ENCODE measurements at regions of chr18 and their contacts with region 1.

Region 1: GRCh38 chr18:32974421-32975162 is 201.8 kb upstream of the KLHL14 start:
- DNase-seq: no peak
- ATAC-seq: no peak
- H3K4me3 ChIP-seq: no peak overlapping the region
- H3K4me3 Mint-ChIP-seq: no peak overlapping the region
- H3K27ac ChIP-seq: no peak overlapping the region
- H3K27ac Mint-ChIP-seq: no peak overlapping the region
- H3K4me1 ChIP-seq: no peaks in the 10 kb centered on the region
- H3K4me1 Mint-ChIP-seq: no peaks in the 10 kb centered on the region
- H3K27me3 ChIP-seq: no peaks in the 10 kb centered on the region
- H3K27me3 Mint-ChIP-seq: no peaks in the 10 kb centered on the region

Region 2: DNA sequence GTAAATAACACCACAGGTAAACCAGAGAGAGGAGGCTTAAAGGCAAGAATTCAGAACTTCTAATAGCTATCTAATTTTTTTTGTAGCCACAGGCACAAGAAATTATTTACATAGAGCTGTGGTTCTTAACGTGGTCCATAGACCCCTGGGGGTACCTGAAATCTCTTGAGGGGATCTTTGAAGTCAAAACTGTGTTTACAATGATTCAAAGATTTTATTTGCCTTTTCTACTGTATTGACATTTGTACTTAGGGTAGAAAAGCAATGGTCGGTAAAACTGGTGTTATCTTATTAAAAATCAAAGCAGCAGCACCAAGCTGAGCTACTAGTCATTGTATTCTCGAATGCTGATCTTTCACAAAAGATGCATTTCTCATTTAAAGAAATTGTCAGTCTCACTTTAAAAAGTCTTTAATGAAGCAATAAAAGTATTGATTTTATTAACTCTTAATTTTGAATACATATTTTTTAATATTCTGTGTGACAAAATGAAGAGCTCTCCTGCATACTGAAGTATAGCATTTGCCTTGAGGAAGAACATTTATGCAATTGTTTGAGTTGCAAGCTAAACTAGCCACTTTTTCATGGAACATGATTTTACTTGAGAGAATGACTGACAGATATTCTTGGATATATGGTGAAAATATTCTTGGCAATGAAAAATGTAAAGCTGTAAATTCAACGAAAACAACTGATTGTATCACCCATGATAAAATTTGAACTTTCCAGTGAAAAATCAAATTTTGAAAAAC is 176.2 kb before region 1 on chr18:
- CTCF ChIA-PET with region 1: no interaction called
- POLR2A ChIA-PET with region 1: no interaction called
- intact Hi-C with region 1: no loop called
- DNase-seq: no peak
- ATAC-seq: no peak
- H3K4me3 ChIP-seq: no peak overlapping the region
- H3K4me3 Mint-ChIP-seq: no peak overlapping the region
- H3K27ac ChIP-seq: no peak overlapping the region
- H3K27ac Mint-ChIP-seq: no peak overlapping the region
- H3K4me1 ChIP-seq: no peaks in the 10 kb centered on the region
- H3K4me1 Mint-ChIP-seq: no peaks in the 10 kb centered on the region
- H3K27me3 ChIP-seq: no peaks in the 10 kb centered on the region
- H3K27me3 Mint-ChIP-seq: peaks cover 0 to 5% (median 0%) of the 10 kb centered on the region in 5 donors

Region 3: DNA sequence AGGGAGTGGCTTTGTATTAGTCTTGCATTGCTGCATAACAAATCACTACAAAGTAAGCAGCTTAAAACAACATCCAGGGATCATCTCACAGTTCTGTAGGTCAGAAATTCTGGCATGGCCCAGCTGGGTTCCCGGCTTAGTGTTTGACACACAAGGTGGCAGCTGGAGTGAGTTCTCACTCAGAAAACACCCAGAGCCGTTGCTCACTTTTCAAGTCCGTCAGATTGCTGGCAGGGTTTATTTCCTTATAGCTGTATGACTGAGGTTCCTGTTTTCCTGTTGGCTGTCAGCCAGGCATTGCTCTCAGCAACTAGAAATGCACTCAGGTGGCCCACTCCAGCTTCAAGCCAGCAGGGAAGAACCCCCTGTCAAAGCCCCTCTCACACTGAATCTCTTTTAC is 141.8 kb after region 1 on chr18:
- CTCF ChIA-PET with region 1: no interaction called
- POLR2A ChIA-PET with region 1: no interaction called
- intact Hi-C with region 1: no loop called
- DNase-seq: no peak
- ATAC-seq: no peak
- H3K4me3 ChIP-seq: no peak overlapping the region
- H3K4me3 Mint-ChIP-seq: no peak overlapping the region
- H3K27ac ChIP-seq: no peak overlapping the region
- H3K27ac Mint-ChIP-seq: no peak overlapping the region
- H3K4me1 ChIP-seq: no peaks in the 10 kb centered on the region
- H3K4me1 Mint-ChIP-seq: no peaks in the 10 kb centered on the region
- H3K27me3 ChIP-seq: no peaks in the 10 kb centered on the region
- H3K27me3 Mint-ChIP-seq: no peaks in the 10 kb centered on the region

Region 4: DNA sequence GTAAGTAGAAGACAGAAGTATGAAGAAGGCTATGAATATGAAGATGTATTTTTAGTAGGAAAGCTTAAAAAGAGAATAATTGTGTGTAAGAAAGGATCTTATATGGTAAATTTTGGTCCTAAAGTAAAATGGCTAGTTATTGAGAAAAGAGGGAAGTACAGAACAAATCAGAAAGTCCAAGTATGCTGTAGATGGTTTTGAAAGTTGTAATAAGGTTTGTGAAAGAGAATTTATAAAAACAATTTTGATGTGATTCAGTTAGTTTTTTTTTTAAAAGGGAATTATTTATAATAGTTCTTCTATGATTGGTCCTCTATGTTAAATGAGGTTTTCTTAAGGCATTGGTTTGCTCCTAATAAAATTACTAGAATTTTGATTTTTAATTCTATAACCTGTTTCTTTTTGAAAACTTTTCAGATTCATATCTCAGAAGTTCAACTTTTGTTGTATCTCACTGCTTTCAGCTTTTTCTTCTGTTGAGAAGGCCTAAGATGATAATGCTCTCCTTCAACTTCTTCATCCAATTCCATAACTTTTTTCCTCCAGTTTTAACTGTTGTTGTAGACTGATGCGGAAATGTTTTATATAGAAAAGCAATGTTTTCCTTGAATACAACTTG is 927.4 kb after region 1 on chr18:
- CTCF ChIA-PET with region 1: no interaction called
- POLR2A ChIA-PET with region 1: no interaction called
- intact Hi-C with region 1: loop called in 1 of 2 experiments (anchors 10 kb)
- DNase-seq: no peak
- ATAC-seq: no peak
- H3K4me3 ChIP-seq: no peak overlapping the region
- H3K4me3 Mint-ChIP-seq: no peak overlapping the region
- H3K27ac ChIP-seq: no peak overlapping the region
- H3K27ac Mint-ChIP-seq: no peak overlapping the region
- H3K4me1 ChIP-seq: no peaks in the 10 kb centered on the region
- H3K4me1 Mint-ChIP-seq: no peaks in the 10 kb centered on the region
- H3K27me3 ChIP-seq: no peaks in the 10 kb centered on the region
- H3K27me3 Mint-ChIP-seq: no peaks in the 10 kb centered on the region